Heart right ventricle (tissue), 16 donors: ENCODE measurements at regions of chr20 and their contacts with region 1.

Region 1: GRCh38 chr20:37734228-37734985 is 40.6 kb downstream of the CTNNBL1 start:
- DNase-seq: no peak
- ATAC-seq: peak in 2 of 8 donors; percentile 18 to 32
- H3K4me3 ChIP-seq: no peak overlapping the region
- H3K27ac ChIP-seq: peak overlapping the region in 3 of 10 donors; percentile 10 to 47 (median 37)
- H3K4me1 ChIP-seq: peaks cover 0 to 57% (median 31%) of the 10 kb centered on the region in 9 donors
- H3K27me3 ChIP-seq: no peaks in the 10 kb centered on the region
- CTCF ChIP-seq: no peak

Region 2: DNA sequence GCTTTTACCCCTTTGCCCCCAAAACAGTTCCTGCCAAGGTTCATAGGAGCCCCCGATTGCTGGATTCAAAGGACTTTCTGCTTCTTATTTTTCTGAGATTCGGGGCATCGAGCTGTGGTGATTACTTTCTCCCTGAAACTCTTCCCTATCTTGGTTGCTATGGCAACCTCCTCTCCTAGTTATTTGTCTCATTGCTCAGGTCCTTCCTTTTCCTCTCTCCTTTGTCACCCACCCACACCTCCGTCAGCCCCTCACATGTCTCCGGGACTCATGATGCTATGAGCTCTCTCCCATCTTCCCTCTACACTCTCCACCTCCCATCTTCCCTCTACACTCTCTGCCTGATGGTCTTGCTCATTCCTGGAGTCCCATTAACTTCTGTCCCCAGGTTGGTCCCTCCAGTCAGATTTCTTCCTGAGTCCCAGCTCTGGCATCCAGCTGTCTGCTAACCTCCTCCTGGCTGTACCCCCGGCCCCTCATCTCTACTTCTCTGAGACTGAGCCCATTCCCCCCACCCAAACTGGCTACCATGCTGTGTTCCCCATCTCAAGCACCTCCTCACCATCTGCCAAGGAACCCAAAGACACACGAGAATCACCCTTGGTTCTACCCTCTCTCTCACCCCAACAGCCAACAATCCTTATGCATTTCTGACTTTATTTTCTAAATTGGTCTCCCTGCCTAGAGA is 243.6 kb before region 1 on chr20:
- intact Hi-C with region 1: no loop called
- DNase-seq: no peak
- ATAC-seq: no peak
- H3K4me3 ChIP-seq: no peak overlapping the region
- H3K27ac ChIP-seq: no peak overlapping the region
- H3K4me1 ChIP-seq: peaks cover 0 to 4% (median 0%) of the 10 kb centered on the region in 9 donors
- H3K27me3 ChIP-seq: no peaks in the 10 kb centered on the region
- CTCF ChIP-seq: no peak

Region 3: DNA sequence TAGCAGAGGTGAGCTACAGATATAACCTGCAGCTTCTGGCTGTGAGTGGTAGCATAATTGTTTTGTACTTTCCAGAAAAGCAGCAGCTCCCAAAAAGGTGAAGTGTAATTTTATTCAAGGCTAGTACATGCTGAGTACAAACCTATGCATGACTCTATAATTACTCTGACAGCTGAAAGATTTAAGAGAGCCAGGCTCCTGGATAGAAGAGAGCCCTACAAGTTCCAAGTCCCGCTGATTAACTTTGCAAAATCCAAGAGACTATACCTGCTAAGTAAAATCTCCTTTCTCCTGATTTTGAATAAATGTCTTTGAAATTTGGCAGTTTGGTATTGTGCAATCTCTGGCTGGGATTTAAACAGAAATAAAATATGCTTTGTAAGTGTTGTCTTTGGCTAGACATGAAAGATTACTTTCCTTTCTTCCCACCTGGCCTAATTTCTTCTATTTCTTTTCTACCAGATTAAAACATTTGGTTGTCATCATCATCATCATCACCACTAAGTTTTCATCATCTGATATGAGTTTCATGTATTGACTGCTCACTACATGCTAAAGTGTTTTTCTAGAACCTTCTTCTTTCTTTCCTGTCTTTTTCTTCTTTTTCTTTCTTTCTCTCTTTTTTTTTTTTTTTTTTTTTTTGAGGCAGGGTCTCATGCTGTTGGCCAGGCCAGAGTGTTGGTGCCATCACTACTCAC is 39.0 kb after region 1 on chr20:
- intact Hi-C with region 1: no loop called
- DNase-seq: no peak
- ATAC-seq: no peak
- H3K4me3 ChIP-seq: no peak overlapping the region
- H3K27ac ChIP-seq: no peak overlapping the region
- H3K4me1 ChIP-seq: peaks cover 0 to 13% (median 0%) of the 10 kb centered on the region in 9 donors
- H3K27me3 ChIP-seq: no peaks in the 10 kb centered on the region
- CTCF ChIP-seq: no peak

Region 4: DNA sequence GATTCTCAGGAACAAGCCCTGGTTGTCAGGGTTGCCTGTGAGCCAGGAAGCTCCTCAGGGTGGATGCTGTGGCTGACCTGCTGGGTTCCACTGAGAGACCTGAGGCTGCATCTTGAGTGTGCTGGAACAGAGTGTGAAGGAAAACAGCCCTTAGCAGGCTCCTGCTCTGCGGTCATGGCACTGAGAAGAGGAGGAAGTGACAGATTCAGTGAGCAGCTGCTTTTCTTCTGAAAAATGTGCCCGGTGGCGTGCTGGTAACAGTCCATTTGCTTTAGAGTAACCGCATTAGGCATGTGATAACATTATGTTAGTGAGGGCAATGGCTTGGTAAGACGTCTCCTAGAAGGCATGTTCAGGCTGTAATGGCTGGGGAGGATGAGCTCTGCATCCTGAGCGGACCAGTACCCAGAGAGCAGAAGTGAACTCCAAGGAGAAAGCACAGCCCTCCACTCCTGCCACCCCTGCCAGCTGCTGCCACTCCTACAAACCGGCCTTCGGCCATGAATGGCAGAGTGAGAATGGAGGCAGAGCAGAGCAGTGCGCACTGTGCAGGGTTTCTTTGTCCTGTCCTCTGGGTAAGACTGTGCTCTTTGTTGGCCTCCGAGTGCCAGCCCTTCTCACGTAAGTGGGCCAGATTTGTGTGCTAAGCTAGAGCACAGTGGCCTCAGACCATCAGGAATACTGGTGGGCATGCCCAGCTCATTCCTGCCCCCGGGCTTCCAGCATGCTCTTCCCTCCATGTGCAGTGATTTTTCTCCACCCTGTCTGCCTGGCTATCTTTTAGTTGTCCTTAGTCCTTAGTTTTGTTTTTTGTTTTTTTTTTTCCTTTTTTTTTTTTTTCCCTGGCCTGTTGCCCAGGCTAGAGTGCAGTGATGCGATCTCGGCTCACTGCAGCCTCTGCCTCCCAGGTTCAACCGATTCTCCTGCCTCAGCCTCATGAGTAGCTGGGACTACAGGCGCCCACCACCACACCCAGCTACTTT is 70.5 kb after region 1 on chr20:
- intact Hi-C with region 1: no loop called
- DNase-seq: no peak
- ATAC-seq: peak in 2 of 8 donors; percentile 17 to 34
- H3K4me3 ChIP-seq: no peak overlapping the region
- H3K27ac ChIP-seq: no peak overlapping the region
- H3K4me1 ChIP-seq: peaks cover 0 to 26% (median 0%) of the 10 kb centered on the region in 9 donors
- H3K27me3 ChIP-seq: no peaks in the 10 kb centered on the region
- CTCF ChIP-seq: no peak

Region 5: GRCh38 chr20:38373231-38373867 is 638.9 kb after region 1 on chr20:
- intact Hi-C with region 1: loop called in 1 of 10 experiments (anchors 5 kb)
- DNase-seq: peak in 1 of 2 donors; percentile 17
- ATAC-seq: peak; percentile 17 to 89 (median 66)
- H3K4me3 ChIP-seq: no peak overlapping the region
- H3K27ac ChIP-seq: peak overlapping the region in 3 of 10 donors; percentile 29 to 39 (median 35)
- H3K4me1 ChIP-seq: peaks cover 0 to 14% (median 0%) of the 10 kb centered on the region in 9 donors
- H3K27me3 ChIP-seq: peaks cover 0 to 4% (median 0%) of the 10 kb centered on the region in 7 donors
- CTCF ChIP-seq: no peak